B cell (primary cell): ENCODE measurements at regions of chr7 and their contacts with region 1.

Region 1: GRCh38 chr7:98280791-98281756 is at the start of gene BRI3:
- DNase-seq: peak; percentile 91
- ATAC-seq: peak; percentile 84
- H3K4me3 ChIP-seq: peak within 1 kb of the TSS; percentile 69 to 92 (median 77)
- H3K4me3 Mint-ChIP-seq: peak within 1 kb of the TSS; percentile 89
- H3K27ac ChIP-seq: peak within 1 kb of the TSS; percentile 83
- H3K27ac Mint-ChIP-seq: peak within 1 kb of the TSS; percentile 91
- H3K4me1 ChIP-seq: peaks cover 21 to 40% of the 10 kb centered on the region in 2 donors
- H3K4me1 Mint-ChIP-seq: peaks cover 35% of the 10 kb centered on the region
- H3K27me3 ChIP-seq: no peaks in the 10 kb centered on the region
- H3K27me3 Mint-ChIP-seq: no peaks in the 10 kb centered on the region
- CTCF ChIP-seq: no peak
- total RNA-seq, gene BRI3: 78.8 and 86.7 TPM in 2 replicates

Region 2: DNA sequence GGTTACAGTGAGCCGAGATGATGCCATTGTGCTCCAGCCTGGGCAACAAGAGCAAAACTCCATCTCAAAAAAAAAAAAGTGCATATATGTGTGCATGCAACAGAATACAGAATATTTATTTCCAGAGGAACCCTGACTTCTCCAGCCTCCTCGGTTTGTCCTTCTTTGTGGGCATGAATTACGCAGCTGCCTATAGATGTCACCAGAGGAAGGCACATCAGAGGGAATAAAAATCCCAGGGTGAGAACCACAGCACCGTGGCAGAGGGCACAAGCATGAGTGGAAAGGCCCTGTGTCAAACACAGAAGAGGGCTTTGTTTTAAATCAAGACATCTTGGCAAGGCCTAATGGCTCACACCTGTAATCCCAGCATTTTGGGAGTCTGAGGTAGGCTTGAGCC is 266.7 kb before region 1 on chr7:
- CTCF ChIA-PET with region 1: no interaction called
- POLR2A ChIA-PET with region 1: no interaction called
- intact Hi-C with region 1: no loop called
- DNase-seq: no peak
- ATAC-seq: no peak
- H3K4me3 ChIP-seq: no peak overlapping the region
- H3K4me3 Mint-ChIP-seq: no peak overlapping the region
- H3K27ac ChIP-seq: no peak overlapping the region
- H3K27ac Mint-ChIP-seq: no peak overlapping the region
- H3K4me1 ChIP-seq: no peaks in the 10 kb centered on the region
- H3K4me1 Mint-ChIP-seq: no peaks in the 10 kb centered on the region
- H3K27me3 ChIP-seq: peaks cover 0 to 4% (median 0%) of the 10 kb centered on the region in 4 experiments
- H3K27me3 Mint-ChIP-seq: peaks cover 23% of the 10 kb centered on the region
- CTCF ChIP-seq: no peak

Region 3: DNA sequence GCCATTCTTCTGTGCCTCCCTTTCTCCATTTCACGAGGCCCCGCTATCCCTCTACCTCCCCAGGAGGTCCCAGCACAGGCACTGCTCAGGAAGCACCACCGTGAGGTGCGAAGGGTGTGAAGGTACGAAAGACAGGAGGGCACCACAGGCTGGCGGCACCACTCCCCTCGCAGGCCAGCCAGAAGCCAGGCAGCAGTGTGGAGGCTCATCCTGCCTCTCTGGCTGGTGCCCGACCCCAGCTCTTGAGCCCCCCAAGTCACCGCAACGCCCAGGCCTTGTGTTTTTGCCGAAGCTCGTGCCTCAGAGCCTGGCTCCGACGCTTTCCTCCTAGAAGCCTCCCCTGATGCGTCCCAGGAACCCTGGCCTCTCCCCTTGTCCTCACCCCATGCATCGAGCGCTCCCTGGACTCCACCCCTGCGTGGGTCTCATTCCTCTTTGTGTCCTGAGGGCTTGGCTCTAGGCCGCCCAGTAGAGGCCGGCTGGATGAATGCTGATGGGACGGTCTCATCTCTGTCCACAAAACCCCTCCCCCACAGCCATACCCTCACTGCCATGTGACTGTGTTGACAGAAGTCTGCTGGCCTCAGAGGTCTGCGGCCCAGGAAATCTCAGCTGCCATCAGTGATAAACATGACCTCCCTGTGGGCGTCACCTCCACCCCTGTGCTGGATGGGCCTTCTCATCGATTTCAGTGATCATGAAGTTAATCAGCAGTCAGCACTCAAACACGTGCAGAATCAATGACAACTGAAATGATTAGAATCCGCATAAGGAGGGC is 19.7 kb after region 1 on chr7:
- CTCF ChIA-PET with region 1: no interaction called
- POLR2A ChIA-PET with region 1: no interaction called
- intact Hi-C with region 1: no loop called
- DNase-seq: no peak
- ATAC-seq: no peak
- H3K4me3 ChIP-seq: no peak overlapping the region
- H3K4me3 Mint-ChIP-seq: no peak overlapping the region
- H3K27ac ChIP-seq: no peak overlapping the region
- H3K27ac Mint-ChIP-seq: no peak overlapping the region
- H3K4me1 ChIP-seq: no peaks in the 10 kb centered on the region
- H3K4me1 Mint-ChIP-seq: no peaks in the 10 kb centered on the region
- H3K27me3 ChIP-seq: no peaks in the 10 kb centered on the region
- H3K27me3 Mint-ChIP-seq: no peaks in the 10 kb centered on the region
- CTCF ChIP-seq: no peak

Region 4: DNA sequence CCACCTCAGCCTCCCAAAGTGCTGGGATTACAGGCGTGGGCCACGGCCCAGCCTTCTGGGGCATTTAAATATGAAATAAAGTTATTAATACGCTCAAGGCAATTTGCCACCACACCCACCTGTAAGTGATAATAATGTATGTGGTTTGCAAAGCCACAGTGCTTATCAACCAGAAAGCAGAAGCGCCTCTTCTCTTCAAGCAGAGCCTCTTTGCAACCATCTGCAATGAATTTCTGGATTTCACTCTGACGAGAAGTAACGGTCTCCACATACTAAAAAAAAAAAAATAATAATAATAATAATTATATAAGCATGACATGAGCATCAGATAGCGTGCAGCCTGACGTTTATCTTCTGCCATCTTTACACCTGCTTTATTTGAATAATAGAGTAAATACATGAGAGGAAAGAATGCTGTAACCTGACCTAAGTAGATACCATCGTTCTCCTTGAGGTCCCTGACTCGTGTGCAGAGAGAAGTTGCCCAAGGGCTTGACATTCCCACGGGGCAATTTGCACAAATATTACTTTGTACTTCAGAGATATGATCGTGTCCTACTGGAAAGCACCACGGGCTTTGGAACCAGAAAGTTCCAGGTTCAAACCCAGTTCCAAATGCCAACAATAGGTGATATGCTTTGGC is 34.4 kb after region 1 on chr7:
- CTCF ChIA-PET with region 1: interaction called, 3 read pairs
- POLR2A ChIA-PET with region 1: interaction called, 4 read pairs
- intact Hi-C with region 1: loop called (anchors 1 kb)
- DNase-seq: peak; percentile 79
- ATAC-seq: peak; percentile 57
- H3K4me3 ChIP-seq: peak overlapping the region in 1 of 5 experiments; percentile 23
- H3K4me3 Mint-ChIP-seq: peak overlapping the region; percentile 56
- H3K27ac ChIP-seq: peak overlapping the region; percentile 72 to 87
- H3K27ac Mint-ChIP-seq: no peak overlapping the region
- H3K4me1 ChIP-seq: peaks cover 26 to 41% of the 10 kb centered on the region in 2 donors
- H3K4me1 Mint-ChIP-seq: peaks cover 41% of the 10 kb centered on the region
- H3K27me3 ChIP-seq: peaks cover 0 to 28% (median 16%) of the 10 kb centered on the region in 4 experiments
- H3K27me3 Mint-ChIP-seq: peaks cover 24% of the 10 kb centered on the region
- CTCF ChIP-seq: no peak

Region 5: GRCh38 chr7:98378210-98378819 is 97.2 kb after region 1 on chr7:
- CTCF ChIA-PET with region 1: no interaction called
- POLR2A ChIA-PET with region 1: no interaction called
- intact Hi-C with region 1: no loop called
- DNase-seq: no peak
- ATAC-seq: no peak
- H3K4me3 ChIP-seq: no peak overlapping the region
- H3K4me3 Mint-ChIP-seq: no peak overlapping the region
- H3K27ac ChIP-seq: no peak overlapping the region
- H3K27ac Mint-ChIP-seq: no peak overlapping the region
- H3K4me1 ChIP-seq: no peaks in the 10 kb centered on the region
- H3K4me1 Mint-ChIP-seq: no peaks in the 10 kb centered on the region
- H3K27me3 ChIP-seq: no peaks in the 10 kb centered on the region
- H3K27me3 Mint-ChIP-seq: no peaks in the 10 kb centered on the region
- CTCF ChIP-seq: no peak

Region 6: DNA sequence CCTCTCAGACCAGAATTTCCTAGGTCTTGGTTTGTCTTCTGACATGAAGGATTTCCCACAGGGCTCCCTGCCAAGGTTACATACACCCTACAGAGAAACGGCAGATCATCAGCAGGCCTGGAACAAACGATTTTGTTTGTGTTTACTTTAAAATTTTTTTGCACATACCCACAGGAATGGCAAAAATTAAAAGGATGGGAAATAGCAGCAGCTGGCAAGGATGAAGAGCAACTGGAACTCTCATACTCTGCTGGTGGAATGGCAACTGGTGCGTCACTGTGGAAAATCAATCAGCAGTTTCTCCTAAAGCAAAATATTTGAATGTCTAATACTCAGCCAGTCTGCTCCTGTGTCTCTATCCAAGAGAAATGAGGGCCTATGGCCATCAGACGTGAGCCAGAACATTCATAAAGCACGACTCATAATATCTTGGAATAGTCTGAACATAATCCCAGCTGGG is 113.3 kb after region 1 on chr7:
- CTCF ChIA-PET with region 1: no interaction called
- POLR2A ChIA-PET with region 1: no interaction called
- intact Hi-C with region 1: no loop called
- DNase-seq: no peak
- ATAC-seq: no peak
- H3K4me3 ChIP-seq: no peak overlapping the region
- H3K4me3 Mint-ChIP-seq: no peak overlapping the region
- H3K27ac ChIP-seq: no peak overlapping the region
- H3K27ac Mint-ChIP-seq: no peak overlapping the region
- H3K4me1 ChIP-seq: no peaks in the 10 kb centered on the region
- H3K4me1 Mint-ChIP-seq: peaks cover 2% of the 10 kb centered on the region
- H3K27me3 ChIP-seq: peaks cover 0 to 6% (median 3%) of the 10 kb centered on the region in 4 experiments
- H3K27me3 Mint-ChIP-seq: peaks cover 21% of the 10 kb centered on the region
- CTCF ChIP-seq: no peak